ENCODE measurements at regions of chr3 and their contacts with region 1.

Region 1: DNA sequence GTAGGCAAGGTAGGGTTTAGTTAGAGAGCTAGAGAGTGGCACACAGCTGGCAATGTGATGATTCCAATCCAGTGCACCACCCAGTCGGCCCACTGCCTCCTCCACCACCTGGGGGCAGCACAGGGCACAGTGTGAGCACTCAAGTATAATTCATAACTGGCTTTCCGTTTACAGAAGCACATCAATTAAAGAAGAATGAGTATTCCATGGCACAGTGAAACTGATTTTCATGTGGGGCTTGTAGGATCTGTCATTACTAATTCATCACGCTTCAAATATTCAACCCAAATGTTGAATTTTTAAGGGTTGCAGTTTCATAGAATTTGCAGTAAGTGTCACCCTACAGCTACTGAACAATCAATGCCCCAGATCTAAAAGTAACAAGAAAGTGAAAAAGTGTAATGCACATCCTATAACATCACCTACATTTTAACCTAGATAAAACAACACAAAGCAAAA is 149.9 kb downstream of the IGSF11 start:
- DNase-seq: peak; percentile 47
- H3K27ac ChIP-seq: no peak overlapping the region
- CTCF ChIP-seq: peak; percentile 85

Region 2: GRCh38 chr3:118628704-118629341 is 256.0 kb before region 1 on chr3:
- CTCF ChIA-PET with region 1: no interaction called
- POLR2A ChIA-PET with region 1: no interaction called
- DNase-seq: peak; percentile 69
- H3K27ac ChIP-seq: no peak overlapping the region
- CTCF ChIP-seq: peak; percentile 83

Region 3: DNA sequence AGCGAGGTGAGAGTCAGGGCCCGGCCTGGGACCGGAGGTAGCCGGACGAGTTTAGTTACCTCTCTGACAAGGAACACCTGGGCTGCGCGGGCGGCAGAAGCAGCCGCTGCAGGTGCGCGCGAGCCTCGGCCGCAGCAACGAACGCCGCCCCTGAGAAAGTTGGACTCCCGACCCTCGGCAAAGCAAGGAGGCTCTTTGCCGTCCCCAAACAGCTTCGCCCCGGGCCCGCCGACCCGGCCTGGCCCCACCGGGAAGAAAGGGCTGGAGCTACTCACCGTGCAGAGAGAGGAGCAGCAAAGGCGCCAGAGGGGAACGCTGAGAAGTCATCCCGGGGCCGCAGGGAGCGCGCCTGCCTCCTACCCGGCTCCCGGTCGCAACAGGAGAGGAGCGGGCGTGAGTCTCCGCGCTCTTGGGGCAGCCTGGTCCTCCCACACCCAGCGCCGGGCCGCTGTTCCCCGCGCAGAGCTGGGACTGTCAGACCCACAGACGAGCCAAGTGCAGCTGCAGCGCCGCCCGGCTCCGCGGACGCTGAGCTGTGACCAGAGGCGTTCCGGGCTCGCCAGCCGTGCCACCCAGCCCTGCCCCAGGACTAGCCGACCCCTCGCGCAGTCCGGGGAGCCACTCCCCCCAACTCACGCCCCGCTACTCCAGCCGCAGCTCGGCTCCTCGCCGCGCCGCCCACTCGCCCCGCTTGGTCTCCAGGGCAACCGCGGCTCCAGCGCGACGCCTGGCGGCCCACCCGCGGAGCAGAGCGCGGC is 149.7 kb after region 1 on chr3 and contains the start of gene IGSF11:
- CTCF ChIA-PET with region 1: interaction called, 45 read pairs
- POLR2A ChIA-PET with region 1: no interaction called
- DNase-seq: peak; percentile 56
- H3K27ac ChIP-seq: no peak within 1 kb of the TSS
- CTCF ChIP-seq: peak; percentile 73

Region 4: GRCh38 chr3:119098619-119099222 is 213.9 kb after region 1 on chr3:
- CTCF ChIA-PET with region 1: interaction called, 57 read pairs
- POLR2A ChIA-PET with region 1: no interaction called
- DNase-seq: peak; percentile 36
- H3K27ac ChIP-seq: no peak overlapping the region
- CTCF ChIP-seq: peak; percentile 71

Region 5: GRCh38 chr3:119240591-119241434 is 356.0 kb after region 1 on chr3 and contains the start of gene B4GALT4:
- CTCF ChIA-PET with region 1: interaction called, 10 read pairs
- POLR2A ChIA-PET with region 1: no interaction called
- DNase-seq: peak; percentile 83
- H3K27ac ChIP-seq: peak within 1 kb of the TSS; percentile 82
- CTCF ChIP-seq: no peak

Region 6: GRCh38 chr3:119388577-119388976 is 503.8 kb after region 1 on chr3:
- CTCF ChIA-PET with region 1: interaction called, 11 read pairs
- POLR2A ChIA-PET with region 1: no interaction called
- DNase-seq: peak; percentile 10
- H3K27ac ChIP-seq: no peak overlapping the region
- CTCF ChIP-seq: no peak

Measured in RWPE1 (cell line).